ENCODE measurements at regions of chr19 and their contacts with region 1.

Region 1: DNA sequence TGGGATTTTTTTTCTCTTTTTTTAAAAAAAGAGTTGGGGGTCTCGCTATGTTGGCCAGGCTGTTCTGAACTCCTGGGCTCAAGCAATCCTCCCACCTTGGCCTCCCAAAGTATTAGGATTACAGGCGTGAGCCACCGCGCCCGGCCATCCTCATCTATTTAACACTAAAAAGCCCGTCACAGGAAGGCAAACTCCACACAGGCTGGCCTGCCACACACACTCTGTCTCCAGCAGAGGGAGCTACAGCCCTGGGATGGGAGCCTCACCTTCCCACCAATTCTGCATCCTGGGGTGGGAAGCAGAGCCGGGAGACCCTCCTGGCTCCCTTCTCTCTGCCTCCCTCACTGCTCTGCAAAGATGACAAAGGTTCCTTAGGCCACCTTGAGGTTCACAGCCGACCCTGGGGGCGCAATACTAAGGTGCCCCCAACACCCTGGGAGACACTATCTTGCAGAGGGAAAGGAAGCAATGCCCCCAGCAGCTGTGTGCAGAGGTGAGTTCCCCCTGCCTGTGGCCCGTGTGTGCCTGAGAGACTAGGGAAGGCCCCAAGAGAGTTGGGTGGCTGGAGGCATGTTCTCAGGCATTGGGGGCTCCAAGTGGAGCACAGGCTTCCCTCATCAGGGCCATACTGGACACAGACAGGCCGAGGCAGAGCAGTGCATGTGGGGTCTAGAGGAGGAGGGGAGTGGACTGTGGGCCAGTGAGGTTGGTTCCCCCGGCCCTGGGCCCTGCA is 27.4 kb upstream of the TIMM44 start:
- DNase-seq: peak in 1 of 2 experiments; percentile 46
- H3K4me3 ChIP-seq: no peak overlapping the region
- H3K27ac ChIP-seq: no peak overlapping the region
- H3K4me1 ChIP-seq: no peaks in the 10 kb centered on the region
- H3K27me3 ChIP-seq: no peaks in the 10 kb centered on the region
- CTCF ChIP-seq: peak; percentile 94

Region 2: DNA sequence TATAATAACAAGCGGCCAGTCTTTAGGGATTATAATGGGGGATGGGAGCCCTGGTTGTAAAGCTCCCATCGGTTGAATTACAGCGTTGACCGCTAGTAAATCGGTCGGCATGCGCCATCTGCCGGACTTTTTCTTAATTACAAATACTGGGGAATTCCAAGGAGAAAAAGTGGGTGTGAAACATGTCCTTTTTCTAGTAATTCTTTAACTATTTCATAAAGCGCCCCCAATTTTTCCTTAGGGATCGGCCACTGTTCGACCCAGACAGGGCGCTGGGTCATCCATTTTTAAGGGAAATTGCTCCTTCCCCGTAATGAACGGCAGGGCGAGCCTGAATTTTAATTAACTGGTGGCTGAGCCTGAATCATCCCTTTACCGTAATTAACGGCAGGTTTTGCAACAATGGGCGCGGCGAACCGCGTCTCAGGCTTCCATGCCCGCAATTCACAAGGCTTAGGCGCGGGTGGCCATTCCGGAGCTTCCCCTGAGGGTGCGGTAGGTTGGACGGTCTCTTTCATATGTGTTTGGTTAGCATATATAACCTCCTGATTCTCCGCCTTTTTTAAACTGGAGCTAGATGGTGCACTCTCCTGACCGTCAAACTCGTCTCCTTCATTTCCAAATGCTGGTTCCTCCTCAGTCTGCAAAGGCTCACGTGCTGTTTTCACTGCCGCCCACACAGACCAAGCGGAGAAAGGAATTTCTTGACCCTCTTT is 171.1 kb before region 1 on chr19:
- CTCF ChIA-PET with region 1: no interaction called
- POLR2A ChIA-PET with region 1: no interaction called
- intact Hi-C with region 1: no loop called
- DNase-seq: peak; percentile 61 to 65
- H3K4me3 ChIP-seq: peak overlapping the region; percentile 51
- H3K27ac ChIP-seq: no peak overlapping the region
- H3K4me1 ChIP-seq: peaks cover 6% of the 10 kb centered on the region; the same call in 1 of the 2 replicates
- H3K27me3 ChIP-seq: no peaks in the 10 kb centered on the region
- CTCF ChIP-seq: peak; percentile 87

Region 3: DNA sequence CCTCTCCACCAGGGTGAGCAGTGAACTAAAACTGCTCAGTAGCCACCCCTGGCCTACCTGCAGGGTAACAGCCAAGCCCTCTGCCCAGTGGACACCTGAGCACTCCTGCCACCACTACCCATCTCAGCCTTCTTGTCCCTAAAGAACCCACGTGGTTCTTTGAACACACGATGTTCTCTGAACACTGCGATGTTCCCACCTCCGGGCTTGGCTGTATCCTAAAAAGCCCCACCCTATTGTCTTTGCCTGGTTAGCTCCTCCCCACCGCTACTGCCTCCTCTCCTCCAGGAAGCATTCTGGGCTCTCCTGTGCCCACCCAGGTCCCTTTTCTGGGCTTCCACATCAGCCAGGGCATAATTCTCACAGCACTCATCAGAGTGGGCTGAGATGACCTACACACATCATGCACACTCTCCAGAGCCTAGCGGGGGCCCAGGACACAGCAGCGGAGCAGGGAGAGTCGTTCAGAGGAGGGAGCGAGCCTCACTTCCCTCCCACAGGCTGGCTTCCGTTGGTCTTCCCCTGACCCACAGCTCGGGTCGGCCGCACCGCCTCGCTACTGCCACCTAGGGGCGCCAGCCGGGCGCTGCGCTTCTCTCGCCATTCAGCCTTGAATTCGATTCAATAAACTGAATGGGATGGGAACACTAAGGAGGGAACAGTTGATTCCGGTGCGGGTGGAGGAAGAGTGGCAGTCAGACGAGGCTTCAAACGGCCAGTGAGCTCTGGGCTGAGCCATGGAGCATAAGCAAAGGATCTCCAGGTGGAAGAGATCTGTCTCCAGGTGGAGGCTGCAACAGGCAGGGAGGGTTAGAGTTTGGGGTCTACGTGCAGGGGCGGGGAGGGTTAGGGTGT is 31.3 kb after region 1 on chr19:
- CTCF ChIA-PET with region 1: interaction called, 7 read pairs
- POLR2A ChIA-PET with region 1: interaction called, 8 read pairs
- intact Hi-C with region 1: loop called (anchors 1 kb)
- DNase-seq: peak; percentile 76 to 84
- H3K4me3 ChIP-seq: peak overlapping the region; percentile 11; the same call in 1 of the 2 replicates
- H3K27ac ChIP-seq: 0 out of 2 replicates have a peak overlapping the region, but pooled peaks have one; percentile 2
- H3K4me1 ChIP-seq: peaks cover 30% of the 10 kb centered on the region
- H3K27me3 ChIP-seq: no peaks in the 10 kb centered on the region
- CTCF ChIP-seq: peak; percentile 99

Measured in PC-9 (cell line).